ENCODE measurements at regions of chr16 and their contacts with region 1.

Region 1: GRCh38 chr16:13660807-13661206 is 259.1 kb upstream of the ERCC4 start:
- DNase-seq: no peak
- H3K4me3 ChIP-seq: no peak overlapping the region
- H3K27ac ChIP-seq: no peak overlapping the region
- H3K4me1 ChIP-seq: no peaks in the 10 kb centered on the region
- H3K27me3 ChIP-seq: peaks cover 47% of the 10 kb centered on the region
- CTCF ChIP-seq: no peak

Region 2: GRCh38 chr16:13553453-13553985 is 107.3 kb before region 1 on chr16:
- CTCF ChIA-PET with region 1: no interaction called
- POLR2A ChIA-PET with region 1: interaction called, 23 read pairs
- intact Hi-C with region 1: no loop called
- DNase-seq: no peak
- H3K4me3 ChIP-seq: no peak overlapping the region
- H3K27ac ChIP-seq: no peak overlapping the region
- H3K4me1 ChIP-seq: no peaks in the 10 kb centered on the region
- H3K27me3 ChIP-seq: no peaks in the 10 kb centered on the region
- CTCF ChIP-seq: no peak

Region 3: GRCh38 chr16:13680021-13680889 is 19.4 kb after region 1 on chr16:
- CTCF ChIA-PET with region 1: no interaction called
- POLR2A ChIA-PET with region 1: no interaction called
- intact Hi-C with region 1: no loop called
- DNase-seq: no peak
- H3K4me3 ChIP-seq: no peak overlapping the region
- H3K27ac ChIP-seq: no peak overlapping the region
- H3K4me1 ChIP-seq: no peaks in the 10 kb centered on the region
- H3K27me3 ChIP-seq: peaks cover 72% of the 10 kb centered on the region
- CTCF ChIP-seq: no peak

Region 4: DNA sequence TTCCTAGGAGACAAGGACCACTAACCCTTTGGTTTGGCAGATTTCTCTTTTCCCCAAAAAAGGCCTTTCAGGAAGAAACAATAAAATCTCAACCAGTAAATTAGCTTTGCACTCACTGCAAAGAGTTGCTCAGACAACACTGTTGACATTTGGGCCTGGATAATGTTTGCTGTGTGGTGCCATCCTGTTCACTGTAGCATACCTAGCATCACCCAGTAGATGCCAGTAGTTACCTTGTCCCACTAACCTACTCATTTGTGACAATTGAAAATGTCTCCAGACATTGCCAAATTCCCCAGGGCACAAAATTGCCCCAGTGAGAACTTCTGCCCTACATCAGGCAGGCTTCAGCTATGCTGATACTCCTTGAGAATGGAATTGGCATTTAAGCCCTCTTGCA is 82.1 kb after region 1 on chr16:
- CTCF ChIA-PET with region 1: no interaction called
- POLR2A ChIA-PET with region 1: no interaction called
- intact Hi-C with region 1: no loop called
- DNase-seq: no peak
- H3K4me3 ChIP-seq: no peak overlapping the region
- H3K27ac ChIP-seq: no peak overlapping the region
- H3K4me1 ChIP-seq: no peaks in the 10 kb centered on the region
- H3K27me3 ChIP-seq: peaks cover 52% of the 10 kb centered on the region
- CTCF ChIP-seq: no peak

Measured in PC-9 (cell line).